ENCODE measurements at regions of chr13 and their contacts with region 1.

Region 1: GRCh38 chr13:79445968-79446645 is 34.8 kb upstream of the NDFIP2 start:
- DNase-seq: no peak
- ATAC-seq: no peak; the same call in 1 of the 3 replicates
- H3K4me3 ChIP-seq: no peak overlapping the region
- H3K27ac ChIP-seq: no peak overlapping the region
- H3K4me1 ChIP-seq: 0 out of 2 replicates have a peak, but pooled peaks cover 1% of the 10 kb centered on the region
- H3K27me3 ChIP-seq: no peaks in the 10 kb centered on the region
- CTCF ChIP-seq: no peak
- EP300 ChIP-seq: no peak
- POLR2A ChIP-seq: no peak
- RAD21 ChIP-seq: no peak

Region 2: GRCh38 chr13:79434556-79434955 is 11.6 kb before region 1 on chr13:
- CTCF ChIA-PET with region 1: interaction called, 3 read pairs
- POLR2A ChIA-PET with region 1: interaction called, 3 read pairs
- RAD21 ChIA-PET with region 1: interaction called, 3 read pairs
- SMC1A ChIA-PET with region 1: interaction called, 10 read pairs
- in situ Hi-C with region 1: no loop called
- intact Hi-C with region 1: no loop called
- DNase-seq: no peak
- ATAC-seq: no peak
- H3K4me3 ChIP-seq: no peak overlapping the region
- H3K27ac ChIP-seq: no peak overlapping the region
- H3K4me1 ChIP-seq: no peaks in the 10 kb centered on the region
- H3K27me3 ChIP-seq: no peaks in the 10 kb centered on the region; a peak in 1 of 4 replicates
- CTCF ChIP-seq: no peak
- EP300 ChIP-seq: no peak
- POLR2A ChIP-seq: no peak
- RAD21 ChIP-seq: no peak

Measured in GM12878 (cell line).